ENCODE measurements at regions of chr2 and their contacts with region 1.

Region 1: GRCh38 chr2:219689676-219690628 is 62.5 kb downstream of the SLC4A3 start:
- DNase-seq: peak in 1 of 2 donors; percentile 34
- H3K4me3 ChIP-seq: no peak overlapping the region
- CTCF ChIP-seq: peak in 1 of 3 donors; percentile 25
- POLR2A ChIP-seq: no peak

Region 2: DNA sequence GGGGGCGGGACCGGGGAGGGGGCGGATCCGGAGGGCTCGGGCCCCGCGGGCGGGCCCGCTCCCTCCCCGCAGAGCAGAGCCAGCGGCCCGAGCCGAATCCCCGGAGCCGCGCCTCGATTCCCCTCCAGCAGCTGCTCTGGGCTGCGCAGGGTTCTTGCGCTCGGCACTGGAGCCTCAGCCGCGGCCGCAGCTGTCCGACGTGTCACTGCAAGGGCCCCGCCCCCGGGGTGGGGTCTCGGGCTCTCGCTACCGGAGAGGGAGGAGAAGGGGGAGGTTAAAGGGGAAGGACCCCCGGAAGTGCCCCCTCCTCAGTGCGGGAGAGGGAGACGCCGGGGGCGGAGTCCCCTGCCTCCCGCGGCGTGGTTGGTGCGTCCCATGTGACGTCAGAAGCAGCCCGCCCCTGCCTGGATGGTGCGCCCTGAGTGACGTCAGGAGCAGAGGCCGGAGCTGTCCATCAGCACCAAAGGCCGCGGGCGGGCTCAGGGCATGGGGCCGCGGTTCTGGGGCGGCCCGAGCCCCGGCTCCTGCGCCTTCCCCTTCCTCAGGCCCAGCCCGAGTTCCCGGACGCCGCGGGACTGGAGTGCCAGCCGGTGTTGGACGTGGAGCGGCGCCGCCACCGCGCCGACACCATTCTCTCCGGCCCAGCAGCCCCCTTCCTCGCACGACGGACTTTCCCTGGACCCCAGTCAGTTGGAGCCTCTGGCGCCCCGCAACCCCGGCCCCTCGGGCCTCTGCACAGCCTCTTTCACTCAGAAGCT is 146.2 kb before region 1 on chr2 and contains the starts of genes CHPF and TMEM198:
- intact Hi-C with region 1: loop called (anchors 5 kb)
- DNase-seq: peak; percentile 98 to 100
- H3K4me3 ChIP-seq: peak within 1 kb of the TSS; percentile 41
- CTCF ChIP-seq: no peak
- POLR2A ChIP-seq: no peak
- total RNA-seq, gene CHPF: 37.8 to 73.1 (median 58.4) TPM
- total RNA-seq, gene TMEM198: 0.17 to 2.1 (median 1.0) TPM